Spleen (tissue), 13 donors: ENCODE measurements at regions of chr4 and their contacts with region 1.

Region 1: GRCh38 chr4:184538023-184538599 is 63.8 kb upstream of the IRF2 start:
- DNase-seq: peak; percentile 92
- H3K4me3 ChIP-seq: peak overlapping the region; percentile 52 to 82 (median 55)
- H3K27ac ChIP-seq: peak overlapping the region; percentile 95 to 99 (median 98)
- H3K4me1 ChIP-seq: peaks cover 24 to 47% (median 44%) of the 10 kb centered on the region in 6 donors
- H3K27me3 ChIP-seq: no peaks in the 10 kb centered on the region
- CTCF ChIP-seq: peak; percentile 58 to 93 (median 79)
- POLR2A ChIP-seq: no peak

Region 2: DNA sequence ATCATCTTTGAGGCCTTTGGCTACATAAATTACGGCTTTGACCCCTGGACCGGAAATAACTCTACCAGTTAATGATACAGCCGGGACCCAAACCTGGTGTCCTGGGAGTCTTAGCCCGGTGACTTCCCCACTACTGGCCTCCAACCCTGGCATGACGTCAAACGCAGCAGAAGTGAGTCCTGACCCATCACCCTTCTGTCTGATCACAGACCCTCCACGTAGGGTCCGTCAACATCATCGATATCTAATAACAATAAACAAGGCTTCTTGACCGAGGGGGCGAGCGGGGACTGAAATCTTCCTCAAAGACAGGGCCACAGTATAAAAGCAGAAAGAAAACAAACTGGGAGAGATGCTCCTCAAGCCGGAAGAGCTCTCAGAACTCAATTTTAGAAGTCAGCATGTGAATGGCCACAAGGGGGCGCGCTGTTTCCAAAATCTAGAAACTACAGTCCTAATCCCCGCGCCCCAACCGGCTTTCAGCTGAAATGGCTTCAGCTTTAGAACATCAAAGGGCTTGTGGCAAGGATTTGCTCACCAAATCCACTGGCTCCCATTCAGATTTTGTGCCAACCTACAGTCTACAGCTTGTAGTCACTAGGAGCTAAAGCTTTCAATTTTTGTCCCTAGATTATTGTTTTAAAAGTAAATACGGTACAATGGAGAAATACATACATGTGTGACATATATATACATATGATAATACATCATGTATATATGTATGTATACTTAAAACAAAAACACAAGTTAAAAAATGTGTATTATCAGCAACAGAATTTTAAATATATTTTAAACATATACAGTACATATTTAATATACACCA is 274.0 kb before region 1 on chr4:
- intact Hi-C with region 1: loop called (anchors 5 kb)
- DNase-seq: peak; percentile 96
- H3K4me3 ChIP-seq: peak overlapping the region in 1 of 8 donors; percentile 43
- H3K27ac ChIP-seq: peak overlapping the region in 5 of 8 donors; percentile 20 to 71 (median 60)
- H3K4me1 ChIP-seq: peaks cover 3 to 57% (median 45%) of the 10 kb centered on the region in 6 donors
- H3K27me3 ChIP-seq: no peaks in the 10 kb centered on the region
- CTCF ChIP-seq: peak; percentile 54 to 95 (median 89)
- POLR2A ChIP-seq: no peak

Region 3: GRCh38 chr4:184417802-184418511 is 120.2 kb before region 1 on chr4:
- intact Hi-C with region 1: loop called (anchors 10 kb)
- DNase-seq: no peak
- H3K4me3 ChIP-seq: peak overlapping the region in 3 of 8 donors; percentile 25 to 57 (median 30)
- H3K27ac ChIP-seq: peak overlapping the region; percentile 70 to 93 (median 83)
- H3K4me1 ChIP-seq: peaks cover 54 to 100% (median 82%) of the 10 kb centered on the region in 6 donors
- H3K27me3 ChIP-seq: no peaks in the 10 kb centered on the region
- CTCF ChIP-seq: no peak
- POLR2A ChIP-seq: no peak